Right cardiac atrium (tissue), 5 donors: ENCODE measurements at regions of chr10 and their contacts with region 1.

Region 1: GRCh38 chr10:55091691-55092328 is 290.8 kb upstream of the PCDH15 start:
- DNase-seq: no peak
- ATAC-seq: no peak
- H3K4me3 ChIP-seq: no peak overlapping the region
- H3K27ac ChIP-seq: no peak overlapping the region
- H3K4me1 ChIP-seq: no peaks in the 10 kb centered on the region
- H3K27me3 ChIP-seq: no peaks in the 10 kb centered on the region

Region 2: GRCh38 chr10:55495555-55495954 is 403.7 kb after region 1 on chr10:
- intact Hi-C with region 1: loop called in 1 of 4 experiments (anchors 10 kb)
- DNase-seq: no peak
- ATAC-seq: no peak
- H3K4me3 ChIP-seq: no peak overlapping the region
- H3K27ac ChIP-seq: no peak overlapping the region
- H3K4me1 ChIP-seq: no peaks in the 10 kb centered on the region
- H3K27me3 ChIP-seq: no peaks in the 10 kb centered on the region